ENCODE measurements at regions of chr2 and their contacts with region 1.

Region 1: DNA sequence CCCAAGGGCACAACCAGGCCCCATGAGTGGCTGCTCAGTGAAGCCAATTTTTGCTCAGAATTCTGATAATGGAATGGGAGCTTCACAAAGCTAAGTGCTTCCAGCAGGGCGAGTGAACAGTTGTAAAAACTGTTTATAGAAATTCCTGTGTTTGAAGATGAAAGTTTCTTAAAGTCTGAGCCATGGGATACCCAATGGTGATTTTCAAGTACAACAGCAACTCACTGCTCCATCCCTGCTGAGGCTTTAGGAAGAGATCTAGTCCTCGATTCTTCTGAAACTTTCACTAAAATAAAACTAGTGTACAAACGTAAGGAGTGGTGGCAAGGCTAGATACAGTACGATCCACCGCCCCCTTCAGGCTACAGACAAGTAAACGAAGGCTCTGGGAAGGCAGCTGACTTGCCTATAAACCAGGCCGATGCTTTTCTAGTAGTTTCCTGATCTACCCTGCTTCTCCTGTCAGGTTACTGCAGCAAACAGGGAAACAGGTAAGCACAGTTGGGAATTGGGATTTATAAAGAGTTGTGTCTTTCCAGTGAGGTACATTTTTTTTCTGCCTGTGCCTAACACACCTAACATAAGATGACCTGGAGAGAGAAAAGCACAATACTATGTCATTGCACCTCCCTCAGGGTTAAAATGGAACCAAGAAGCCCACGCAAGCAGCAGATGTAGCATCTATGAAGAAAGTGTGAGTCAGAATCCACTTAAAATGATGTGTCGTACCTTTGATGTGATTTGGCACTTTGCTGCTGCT is 108.7 kb downstream of the UXS1 start:
- DNase-seq: peak; percentile 78
- ATAC-seq: peak; percentile 96
- H3K4me3 Mint-ChIP-seq: peak overlapping the region; percentile 54
- H3K27ac Mint-ChIP-seq: peak overlapping the region; percentile 87
- H3K4me1 Mint-ChIP-seq: peaks cover 68% of the 10 kb centered on the region
- H3K27me3 Mint-ChIP-seq: no peaks in the 10 kb centered on the region

Region 2: GRCh38 chr2:105369747-105370690 is 715.3 kb before region 1 on chr2:
- CTCF ChIA-PET with region 1: no interaction called
- POLR2A ChIA-PET with region 1: no interaction called
- intact Hi-C with region 1: loop called in 1 of 2 experiments (anchors 10 kb)
- DNase-seq: peak; percentile 95
- ATAC-seq: peak; percentile 99
- H3K4me3 Mint-ChIP-seq: no peak overlapping the region
- H3K27ac Mint-ChIP-seq: no peak overlapping the region
- H3K4me1 Mint-ChIP-seq: peaks cover 10% of the 10 kb centered on the region
- H3K27me3 Mint-ChIP-seq: no peaks in the 10 kb centered on the region

Region 3: DNA sequence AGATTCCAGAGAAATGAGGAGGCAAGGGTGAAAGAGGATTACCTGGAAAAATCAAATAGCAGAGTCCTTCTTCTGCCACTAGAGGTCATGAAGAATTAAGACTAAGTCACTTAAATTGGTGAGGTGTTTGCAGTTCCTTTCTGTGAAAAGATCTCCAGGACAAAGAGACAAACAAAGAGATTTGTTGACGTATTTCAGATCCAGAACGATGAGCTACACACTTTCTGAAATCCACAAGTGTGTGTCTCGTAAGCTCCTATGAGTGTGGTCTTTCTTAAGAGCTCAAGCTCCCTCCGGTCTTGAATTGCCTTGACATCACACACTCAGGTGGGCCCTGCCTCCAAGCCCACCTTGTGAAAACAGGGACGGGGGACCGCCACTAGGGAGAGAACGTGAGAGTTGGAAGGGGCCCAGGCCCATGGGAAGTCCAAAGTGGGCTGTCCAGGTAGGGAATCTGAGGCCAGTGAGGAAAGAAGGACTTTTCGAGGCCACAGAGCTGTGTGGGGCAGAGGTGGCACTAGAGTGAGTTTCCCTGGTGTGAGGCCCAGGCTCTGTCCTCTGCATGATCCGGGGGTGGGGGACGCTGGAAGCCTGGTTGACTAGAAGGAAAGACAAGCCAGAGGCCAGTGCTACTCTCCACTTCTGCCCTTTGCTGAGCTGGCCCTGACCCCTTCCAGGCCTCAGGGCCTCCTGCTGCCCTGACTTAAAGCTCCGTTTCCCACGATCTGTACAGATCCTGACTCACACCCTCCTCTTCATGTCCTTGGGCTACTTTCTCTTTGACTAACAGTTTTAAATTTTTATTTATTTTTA is 508.7 kb before region 1 on chr2:
- CTCF ChIA-PET with region 1: interaction called, 4 read pairs
- POLR2A ChIA-PET with region 1: no interaction called
- intact Hi-C with region 1: loop called (anchors 1 to 2 kb)
- DNase-seq: no peak
- ATAC-seq: peak; percentile 81
- H3K4me3 Mint-ChIP-seq: no peak overlapping the region
- H3K27ac Mint-ChIP-seq: peak overlapping the region; percentile 89
- H3K4me1 Mint-ChIP-seq: peaks cover 25% of the 10 kb centered on the region
- H3K27me3 Mint-ChIP-seq: no peaks in the 10 kb centered on the region

Region 4: DNA sequence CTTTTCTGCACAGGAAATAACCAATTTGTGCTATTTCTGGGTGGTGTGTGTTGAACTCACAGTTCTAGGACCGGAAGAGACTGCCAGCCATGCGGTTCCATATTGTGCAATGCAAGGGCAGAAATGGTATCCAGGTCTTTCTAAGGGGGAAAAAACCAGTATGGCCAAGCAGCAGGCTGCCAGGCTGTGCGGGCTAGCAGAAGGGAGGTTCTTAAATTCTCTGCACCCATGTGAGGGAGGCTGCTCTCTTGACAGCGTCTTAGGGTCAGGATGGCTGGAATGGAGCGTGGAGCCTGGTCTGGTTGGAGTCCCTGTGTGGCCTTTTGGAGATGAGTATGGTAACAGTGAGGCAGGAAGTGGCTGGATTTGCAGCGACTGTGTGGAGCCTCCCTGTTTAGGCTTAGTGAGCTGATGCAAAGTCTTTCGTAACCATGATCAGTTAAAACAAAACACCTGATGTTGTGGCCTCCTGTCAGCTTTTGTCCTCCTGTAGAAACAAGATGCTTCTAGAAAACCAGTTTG is 288.0 kb before region 1 on chr2:
- CTCF ChIA-PET with region 1: no interaction called
- POLR2A ChIA-PET with region 1: no interaction called
- intact Hi-C with region 1: loop called in 1 of 2 experiments (anchors 5 kb)
- DNase-seq: peak; percentile 69
- ATAC-seq: peak; percentile 44
- H3K4me3 Mint-ChIP-seq: peak overlapping the region; percentile 64
- H3K27ac Mint-ChIP-seq: peak overlapping the region; percentile 94
- H3K4me1 Mint-ChIP-seq: peaks cover 96% of the 10 kb centered on the region
- H3K27me3 Mint-ChIP-seq: no peaks in the 10 kb centered on the region

Region 5: GRCh38 chr2:105919826-105920225 is 165.5 kb before region 1 on chr2:
- CTCF ChIA-PET with region 1: no interaction called
- POLR2A ChIA-PET with region 1: no interaction called
- intact Hi-C with region 1: loop called in 1 of 2 experiments (anchors 1 kb)
- DNase-seq: peak; percentile 74
- ATAC-seq: peak; percentile 72
- H3K4me3 Mint-ChIP-seq: no peak overlapping the region
- H3K27ac Mint-ChIP-seq: no peak overlapping the region
- H3K4me1 Mint-ChIP-seq: peaks cover 31% of the 10 kb centered on the region
- H3K27me3 Mint-ChIP-seq: no peaks in the 10 kb centered on the region

Region 6: GRCh38 chr2:106044021-106044420 is 41.3 kb before region 1 on chr2:
- CTCF ChIA-PET with region 1: no interaction called
- POLR2A ChIA-PET with region 1: no interaction called
- intact Hi-C with region 1: no loop called
- DNase-seq: no peak
- ATAC-seq: no peak
- H3K4me3 Mint-ChIP-seq: no peak overlapping the region
- H3K27ac Mint-ChIP-seq: no peak overlapping the region
- H3K4me1 Mint-ChIP-seq: peaks cover 5% of the 10 kb centered on the region
- H3K27me3 Mint-ChIP-seq: no peaks in the 10 kb centered on the region

Region 7: DNA sequence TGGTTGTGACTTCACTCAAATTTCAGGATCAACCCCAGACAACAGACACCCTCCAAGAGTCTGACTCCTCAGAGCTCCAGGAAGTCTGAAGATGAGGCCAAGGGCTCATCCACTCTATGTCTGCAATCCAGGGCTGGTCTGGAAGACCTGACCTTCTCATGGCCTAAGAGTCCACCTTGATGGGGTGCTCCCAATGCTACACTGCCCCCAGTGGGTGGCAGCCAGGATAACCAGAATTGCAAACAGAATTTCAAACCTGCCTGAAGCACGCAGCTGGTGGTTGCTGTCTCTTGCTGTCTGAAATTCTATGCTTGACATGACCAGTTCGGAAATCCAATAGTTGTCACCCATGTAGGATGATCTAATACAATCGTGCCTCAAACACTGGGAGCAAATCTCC is 12.7 kb after region 1 on chr2:
- CTCF ChIA-PET with region 1: interaction called, 36 read pairs
- POLR2A ChIA-PET with region 1: no interaction called
- intact Hi-C with region 1: no loop called
- DNase-seq: peak; percentile 65
- ATAC-seq: no peak
- H3K4me3 Mint-ChIP-seq: no peak overlapping the region
- H3K27ac Mint-ChIP-seq: no peak overlapping the region
- H3K4me1 Mint-ChIP-seq: peaks cover 41% of the 10 kb centered on the region
- H3K27me3 Mint-ChIP-seq: no peaks in the 10 kb centered on the region

Region 8: GRCh38 chr2:106366204-106366885 is 281.0 kb after region 1 on chr2:
- CTCF ChIA-PET with region 1: no interaction called
- POLR2A ChIA-PET with region 1: no interaction called
- intact Hi-C with region 1: no loop called
- DNase-seq: no peak
- ATAC-seq: no peak
- H3K4me3 Mint-ChIP-seq: no peak overlapping the region
- H3K27ac Mint-ChIP-seq: no peak overlapping the region
- H3K4me1 Mint-ChIP-seq: peaks cover 3% of the 10 kb centered on the region
- H3K27me3 Mint-ChIP-seq: peaks cover 5% of the 10 kb centered on the region

Measured in activated CD4-positive, alpha-beta T cell treated with anti-CD3 and anti-CD28 coated beads for 36 hours (primary cell).